PC-9 (cell line): ENCODE measurements at regions of chr10 and their contacts with region 1.

Region 1: DNA sequence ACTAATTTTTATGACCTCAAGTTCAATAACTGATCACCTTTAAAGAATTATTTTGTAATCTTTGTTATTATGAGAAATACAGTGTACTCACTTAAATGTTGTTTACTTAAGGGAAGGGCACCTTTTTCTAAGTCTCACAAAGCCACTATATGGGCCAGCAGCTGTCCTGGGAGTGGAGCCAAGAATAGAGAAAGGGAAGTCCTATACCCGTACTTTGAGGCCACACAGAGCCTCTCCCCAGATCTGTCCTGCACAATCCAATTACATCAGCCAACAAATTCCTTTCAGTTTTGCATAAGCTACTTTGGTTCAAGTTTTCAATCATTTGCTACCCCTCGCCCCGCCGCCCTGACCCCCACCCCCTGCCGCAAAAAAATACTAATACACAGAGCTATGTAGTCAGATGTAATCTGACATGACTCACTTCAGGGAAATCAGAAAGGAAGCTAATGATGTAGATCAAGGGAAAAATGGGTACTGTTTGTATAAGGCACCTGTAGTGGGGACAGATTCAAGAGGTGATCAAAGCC is 297.4 kb upstream of the NEBL start:
- DNase-seq: peak; percentile 76 to 95
- H3K4me3 ChIP-seq: peak overlapping the region; percentile 13; the same call in 1 of the 2 replicates
- H3K27ac ChIP-seq: peak overlapping the region; percentile 96
- H3K4me1 ChIP-seq: peaks cover 50% of the 10 kb centered on the region
- H3K27me3 ChIP-seq: no peaks in the 10 kb centered on the region
- CTCF ChIP-seq: no peak

Region 2: GRCh38 chr10:20891338-20891714 is 303.2 kb before region 1 on chr10:
- CTCF ChIA-PET with region 1: no interaction called
- POLR2A ChIA-PET with region 1: no interaction called
- intact Hi-C with region 1: loop called (anchors 10 kb)
- DNase-seq: peak; percentile 37 to 72
- H3K4me3 ChIP-seq: no peak overlapping the region
- H3K27ac ChIP-seq: no peak overlapping the region
- H3K4me1 ChIP-seq: no peaks in the 10 kb centered on the region
- H3K27me3 ChIP-seq: no peaks in the 10 kb centered on the region
- CTCF ChIP-seq: no peak

Region 3: DNA sequence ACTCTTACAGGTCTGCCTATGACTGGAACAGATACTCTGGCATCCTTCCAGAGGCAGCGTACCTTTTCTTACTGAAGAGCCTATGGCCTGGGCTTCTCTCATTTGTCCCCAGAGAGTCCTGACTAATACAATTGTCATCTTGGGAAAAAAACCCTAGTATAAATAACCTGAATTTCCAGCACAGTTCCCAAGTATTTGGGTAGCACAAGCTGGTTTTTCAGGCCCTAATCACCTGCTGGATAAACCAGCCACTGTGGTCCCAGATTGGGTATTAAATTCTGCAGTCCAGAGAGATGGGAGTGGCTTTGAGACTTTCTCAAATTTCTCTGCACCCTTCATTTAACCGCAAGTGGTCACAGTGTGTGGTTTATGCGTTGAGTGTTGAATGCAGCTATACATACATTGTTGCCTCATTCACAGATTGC is 110.6 kb before region 1 on chr10:
- CTCF ChIA-PET with region 1: no interaction called
- POLR2A ChIA-PET with region 1: no interaction called
- intact Hi-C with region 1: loop called (anchors 1 kb)
- DNase-seq: peak; percentile 75 to 97
- H3K4me3 ChIP-seq: no peak overlapping the region
- H3K27ac ChIP-seq: peak overlapping the region; percentile 80
- H3K4me1 ChIP-seq: peaks cover 21% of the 10 kb centered on the region
- H3K27me3 ChIP-seq: no peaks in the 10 kb centered on the region
- CTCF ChIP-seq: no peak

Region 4: DNA sequence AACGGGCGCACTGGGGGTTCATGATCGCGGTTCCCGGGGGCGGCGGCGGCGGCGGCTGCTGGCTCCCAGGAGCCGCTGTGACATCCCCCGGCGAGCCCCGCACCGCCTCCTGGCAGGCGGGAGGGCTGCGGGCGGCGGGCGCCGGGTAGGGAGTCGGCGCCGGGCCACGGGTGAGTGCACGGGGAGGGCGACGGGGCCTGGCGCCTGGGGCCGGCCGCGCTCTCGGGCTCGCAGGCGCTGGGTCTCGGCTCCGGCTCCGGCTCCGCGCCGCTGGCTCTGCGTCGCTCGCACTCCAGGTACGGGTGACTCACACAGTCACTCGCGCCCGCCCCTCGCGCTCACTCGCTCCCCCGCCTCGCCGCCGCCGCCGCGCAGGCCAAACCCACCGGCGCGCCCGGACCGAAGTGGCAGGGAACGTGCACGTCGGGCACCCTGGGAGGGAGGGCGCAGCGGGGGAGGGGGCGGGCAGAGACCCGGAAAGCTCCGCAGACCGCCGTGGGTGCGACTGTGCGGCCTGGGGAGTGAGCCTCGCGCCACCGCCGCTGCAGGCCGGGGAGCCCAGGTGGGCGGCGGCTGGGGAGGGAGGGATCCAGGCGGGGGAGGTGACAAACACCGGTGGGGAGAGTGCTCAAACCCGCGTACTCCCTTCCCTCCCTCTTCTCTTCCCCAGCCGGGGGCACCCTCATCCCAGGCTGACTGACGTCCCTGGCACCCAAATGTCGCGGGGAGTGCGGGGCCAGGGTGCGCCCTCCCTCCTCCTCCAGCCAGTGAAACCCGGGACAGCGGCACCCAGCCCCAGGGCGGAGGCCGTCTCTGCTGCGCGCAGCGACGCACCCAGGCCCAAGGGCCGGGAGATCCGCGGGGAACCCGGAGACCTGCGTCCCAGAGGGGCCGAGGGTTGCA is 20.5 kb before region 1 on chr10:
- CTCF ChIA-PET with region 1: no interaction called
- POLR2A ChIA-PET with region 1: interaction called, 11 read pairs
- intact Hi-C with region 1: loop called (anchors 1 kb)
- DNase-seq: peak; percentile 71 to 90
- H3K4me3 ChIP-seq: peak overlapping the region; percentile 81
- H3K27ac ChIP-seq: peak overlapping the region; percentile 94
- H3K4me1 ChIP-seq: peaks cover 31% of the 10 kb centered on the region
- H3K27me3 ChIP-seq: no peaks in the 10 kb centered on the region
- CTCF ChIP-seq: no peak; the same call in 1 of the 2 replicates

Region 5: DNA sequence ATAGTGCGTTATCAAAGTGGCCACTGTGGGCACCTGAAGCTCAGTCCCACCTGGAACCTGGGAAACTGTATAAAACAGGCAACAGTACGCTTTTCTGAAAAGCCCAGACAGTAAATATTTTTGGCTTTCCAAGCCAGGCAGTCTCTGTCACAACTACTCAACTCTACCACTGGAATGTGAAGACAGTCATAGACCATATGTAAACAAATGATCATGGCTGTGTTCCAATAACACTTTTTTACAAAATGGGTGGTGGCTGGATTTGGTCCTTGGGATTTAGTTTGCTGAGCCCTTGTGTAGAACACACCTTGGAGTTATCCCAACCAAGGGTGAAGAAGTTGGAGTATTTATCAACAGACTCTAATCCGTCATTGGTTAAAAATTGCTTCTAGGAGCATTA is 71.1 kb after region 1 on chr10:
- CTCF ChIA-PET with region 1: no interaction called
- POLR2A ChIA-PET with region 1: no interaction called
- intact Hi-C with region 1: loop called (anchors 1 kb)
- DNase-seq: peak; percentile 31 to 85
- H3K4me3 ChIP-seq: no peak overlapping the region
- H3K27ac ChIP-seq: peak overlapping the region; percentile 61
- H3K4me1 ChIP-seq: peaks cover 24% of the 10 kb centered on the region
- H3K27me3 ChIP-seq: no peaks in the 10 kb centered on the region
- CTCF ChIP-seq: no peak

Region 6: GRCh38 chr10:21364196-21365114 is 169.9 kb after region 1 on chr10:
- CTCF ChIA-PET with region 1: no interaction called
- POLR2A ChIA-PET with region 1: no interaction called
- intact Hi-C with region 1: loop called (anchors 1 kb)
- DNase-seq: peak; percentile 88 to 97
- H3K4me3 ChIP-seq: peak overlapping the region; percentile 48; the same call in 1 of the 2 replicates
- H3K27ac ChIP-seq: peak overlapping the region; percentile 100
- H3K4me1 ChIP-seq: peaks cover 75% of the 10 kb centered on the region
- H3K27me3 ChIP-seq: no peaks in the 10 kb centered on the region
- CTCF ChIP-seq: no peak

Region 7: GRCh38 chr10:22427890-22428571 is 1233.5 kb after region 1 on chr10:
- CTCF ChIA-PET with region 1: no interaction called
- POLR2A ChIA-PET with region 1: no interaction called
- intact Hi-C with region 1: loop called (anchors 10 kb)
- DNase-seq: peak; percentile 42 to 93
- H3K4me3 ChIP-seq: peak overlapping the region; percentile 48; the same call in 1 of the 2 replicates
- H3K27ac ChIP-seq: peak overlapping the region; percentile 92
- H3K4me1 ChIP-seq: peaks cover 57% of the 10 kb centered on the region
- H3K27me3 ChIP-seq: no peaks in the 10 kb centered on the region
- CTCF ChIP-seq: no peak